IMR-90 (cell line): ENCODE measurements at regions of chr13 and their contacts with region 1.

Region 1: DNA sequence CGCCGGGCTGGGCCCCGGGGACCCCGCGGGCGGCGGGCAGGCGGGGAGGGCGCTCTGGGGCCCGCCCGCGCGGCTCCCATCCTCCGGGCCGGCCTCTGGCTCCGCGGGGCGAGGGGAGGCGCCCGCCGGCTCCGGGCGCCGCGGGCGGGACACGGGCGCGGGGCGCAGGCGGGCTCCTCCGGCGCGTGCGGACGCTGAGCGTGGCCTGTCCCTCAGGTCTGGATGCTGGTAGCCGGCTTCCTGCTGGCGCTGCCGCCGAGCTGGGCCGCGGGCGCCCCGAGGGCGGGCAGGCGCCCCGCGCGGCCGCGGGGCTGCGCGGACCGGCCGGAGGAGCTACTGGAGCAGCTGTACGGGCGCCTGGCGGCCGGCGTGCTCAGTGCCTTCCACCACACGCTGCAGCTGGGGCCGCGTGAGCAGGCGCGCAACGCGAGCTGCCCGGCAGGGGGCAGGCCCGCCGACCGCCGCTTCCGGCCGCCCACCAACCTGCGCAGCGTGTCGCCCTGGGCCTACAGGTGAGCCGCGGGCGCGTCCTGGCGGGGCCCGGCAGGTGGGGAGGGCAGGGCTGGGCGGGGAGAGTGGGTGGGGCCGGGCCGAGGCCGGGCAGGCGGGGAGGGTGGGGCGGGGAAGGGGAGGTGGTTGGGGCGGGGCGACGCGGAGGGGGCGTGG is 414 bp downstream of the IL17D start:
- DNase-seq: peak; percentile 82
- ATAC-seq: peak; percentile 91
- H3K4me3 ChIP-seq: peak overlapping the region; percentile 77
- H3K27ac ChIP-seq: no peak overlapping the region
- H3K4me1 ChIP-seq: peaks cover 4% of the 10 kb centered on the region; the same call in 1 of the 2 replicates
- H3K27me3 ChIP-seq: peaks cover 4% of the 10 kb centered on the region
- CTCF ChIP-seq: peak; percentile 84
- POLR2A ChIP-seq: peak; percentile 29; the same call in 1 of the 2 replicates
- RAD21 ChIP-seq: peak; percentile 52

Region 2: DNA sequence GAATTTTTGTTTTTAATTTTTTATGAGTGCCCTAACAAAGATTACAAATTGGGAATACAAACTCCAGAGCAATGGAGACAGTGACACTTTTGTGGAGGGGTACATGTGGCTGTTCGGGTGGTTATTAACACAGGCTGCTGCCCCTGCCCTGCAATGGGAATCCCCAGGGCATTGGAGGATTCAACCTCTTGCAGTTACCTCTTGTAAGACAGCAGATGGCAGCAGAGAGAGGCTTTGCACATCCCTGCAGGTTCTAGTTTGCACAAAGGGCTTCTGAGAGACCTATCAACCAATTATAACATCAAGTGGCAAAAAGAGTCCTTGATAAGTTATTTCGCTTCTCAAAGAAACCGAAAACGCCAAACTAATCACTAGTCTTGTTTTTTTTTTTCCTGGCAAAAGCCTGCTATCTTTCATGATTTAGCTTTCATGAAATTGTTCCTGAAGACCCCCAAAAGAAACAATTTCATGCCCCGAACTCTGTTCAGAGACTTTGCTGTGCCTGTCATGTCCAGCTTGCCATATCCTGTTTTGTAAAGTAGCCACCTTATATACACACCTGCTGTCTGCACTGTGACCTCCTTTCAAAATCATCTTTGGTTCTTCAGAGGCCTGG is 521.6 kb before region 1 on chr13:
- CTCF ChIA-PET with region 1: no interaction called
- POLR2A ChIA-PET with region 1: no interaction called
- dilution Hi-C with region 1: no loop called
- in situ Hi-C with region 1: loop called (anchors 25 kb)
- intact Hi-C with region 1: loop called (anchors 5 kb)
- DNase-seq: peak; percentile 80
- ATAC-seq: peak; percentile 99
- H3K4me3 ChIP-seq: no peak overlapping the region
- H3K27ac ChIP-seq: no peak overlapping the region
- H3K4me1 ChIP-seq: no peaks in the 10 kb centered on the region
- H3K27me3 ChIP-seq: peaks cover 19% of the 10 kb centered on the region
- CTCF ChIP-seq: peak; percentile 79
- POLR2A ChIP-seq: no peak
- RAD21 ChIP-seq: peak; percentile 87

Region 3: DNA sequence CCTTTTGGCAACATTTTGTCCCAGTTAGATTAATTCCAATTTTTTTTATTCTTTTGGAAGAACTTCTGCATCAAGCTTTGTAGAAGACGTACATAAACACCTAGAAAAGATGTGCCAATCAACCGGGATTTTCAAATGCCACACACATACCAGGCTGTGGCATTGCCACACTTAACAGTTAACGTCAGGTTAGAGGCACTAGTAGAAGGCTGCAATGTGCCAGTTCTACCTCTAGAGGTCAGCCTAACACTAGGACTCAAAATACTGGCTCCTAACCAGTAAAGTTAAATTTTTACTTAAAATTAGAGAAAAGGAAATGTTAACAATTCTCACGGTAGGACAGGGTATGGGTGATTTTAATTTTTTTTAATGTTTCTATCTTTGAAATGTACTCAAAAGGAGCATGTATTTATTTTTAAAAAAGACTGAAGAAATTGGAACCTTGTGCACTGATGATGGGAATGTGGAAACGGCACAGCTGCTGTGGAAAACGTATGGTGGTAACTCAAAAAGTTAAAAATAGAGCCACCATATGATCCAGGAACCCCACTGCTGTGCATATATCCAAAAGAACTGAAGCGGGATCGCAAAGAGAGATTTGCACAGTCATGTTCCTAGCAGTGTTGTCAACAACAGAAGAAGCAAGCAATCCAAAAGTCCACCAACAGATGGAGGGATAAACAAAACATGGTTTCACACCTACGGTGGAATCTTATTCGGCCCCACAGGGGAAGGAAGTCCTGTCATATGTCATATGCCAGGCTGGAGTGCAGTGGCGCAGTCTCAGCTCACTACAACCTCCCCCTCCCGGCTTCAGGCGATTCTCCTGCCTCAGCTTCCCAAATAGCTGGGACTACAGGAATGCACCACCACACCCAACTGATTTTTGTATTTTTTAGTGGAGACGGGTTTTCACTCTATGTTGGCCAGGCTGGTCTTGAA is 208.6 kb before region 1 on chr13:
- CTCF ChIA-PET with region 1: interaction called, 4 read pairs
- POLR2A ChIA-PET with region 1: no interaction called
- dilution Hi-C with region 1: no loop called
- in situ Hi-C with region 1: loop called (anchors 10 kb)
- intact Hi-C with region 1: loop called (anchors 1 kb)
- DNase-seq: peak; percentile 72
- ATAC-seq: peak; percentile 91
- H3K4me3 ChIP-seq: no peak overlapping the region
- H3K27ac ChIP-seq: no peak overlapping the region
- H3K4me1 ChIP-seq: peaks cover 5% of the 10 kb centered on the region
- H3K27me3 ChIP-seq: no peaks in the 10 kb centered on the region
- CTCF ChIP-seq: peak; percentile 94
- POLR2A ChIP-seq: no peak
- RAD21 ChIP-seq: peak; percentile 98

Region 4: DNA sequence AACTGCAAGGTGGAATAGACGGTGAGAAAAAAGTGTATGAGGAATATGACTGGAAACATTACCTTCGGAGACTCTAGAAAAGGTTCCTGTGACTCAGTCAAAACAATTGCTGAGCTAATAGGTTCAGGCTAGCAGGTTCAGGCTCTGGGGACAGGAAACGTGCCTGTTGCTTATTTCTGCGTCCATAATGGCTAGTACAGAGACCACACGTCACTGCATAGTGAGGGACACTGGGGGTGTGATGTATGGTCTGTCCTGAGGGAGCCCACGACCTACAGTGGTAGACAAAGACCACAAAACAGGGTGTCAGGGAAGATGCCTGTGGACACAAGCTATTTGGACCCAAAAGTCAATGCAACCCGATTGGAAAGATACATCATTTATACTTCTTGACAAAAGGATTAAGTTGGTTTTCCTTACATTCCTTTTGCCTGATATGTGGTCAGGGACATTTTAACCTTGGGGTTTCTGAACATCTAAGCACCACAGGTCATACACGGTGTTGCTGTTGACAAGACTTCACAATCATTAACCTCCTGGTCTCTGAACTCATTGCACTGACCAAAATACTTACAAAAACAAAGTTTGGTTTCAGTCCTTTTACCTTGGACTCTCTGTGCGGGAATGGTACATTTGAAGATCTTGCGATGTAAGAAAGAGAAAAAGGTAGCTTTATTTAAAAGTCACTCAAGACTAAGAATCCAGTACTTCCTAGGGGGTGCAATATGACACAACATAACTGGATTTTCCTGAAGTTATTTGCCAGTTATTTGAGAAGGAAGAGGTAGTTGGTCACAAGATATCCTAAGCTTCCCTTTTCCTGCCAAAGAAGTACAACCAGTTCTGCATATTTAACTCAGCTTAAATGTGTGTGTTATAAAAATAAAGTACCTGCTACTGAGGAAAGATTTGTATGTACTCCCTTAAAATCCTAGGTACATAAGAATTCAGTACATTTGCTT is 198.2 kb before region 1 on chr13:
- CTCF ChIA-PET with region 1: no interaction called
- POLR2A ChIA-PET with region 1: no interaction called
- dilution Hi-C with region 1: no loop called
- in situ Hi-C with region 1: loop called (anchors 10 kb)
- intact Hi-C with region 1: no loop called
- DNase-seq: no peak
- ATAC-seq: no peak
- H3K4me3 ChIP-seq: no peak overlapping the region
- H3K27ac ChIP-seq: no peak overlapping the region
- H3K4me1 ChIP-seq: no peaks in the 10 kb centered on the region
- H3K27me3 ChIP-seq: no peaks in the 10 kb centered on the region
- CTCF ChIP-seq: no peak
- POLR2A ChIP-seq: no peak
- RAD21 ChIP-seq: no peak

Region 5: GRCh38 chr13:20525690-20526544 is 178.0 kb before region 1 on chr13 and contains the start of gene CRYL1:
- CTCF ChIA-PET with region 1: no interaction called
- POLR2A ChIA-PET with region 1: no interaction called
- dilution Hi-C with region 1: no loop called
- in situ Hi-C with region 1: no loop called
- intact Hi-C with region 1: loop called (anchors 1 kb)
- DNase-seq: peak; percentile 73
- ATAC-seq: peak; percentile 99
- H3K4me3 ChIP-seq: peak within 1 kb of the TSS; percentile 87
- H3K27ac ChIP-seq: peak within 1 kb of the TSS; percentile 59; the same call in 1 of the 2 replicates
- H3K4me1 ChIP-seq: 0 out of 2 replicates have a peak, but pooled peaks cover 2% of the 10 kb centered on the region
- H3K27me3 ChIP-seq: no peaks in the 10 kb centered on the region
- CTCF ChIP-seq: no peak
- POLR2A ChIP-seq: peak; percentile 60; the same call in 1 of the 2 replicates
- RAD21 ChIP-seq: no peak
- total RNA-seq, gene CRYL1: 10.6 and 11.7 TPM in 2 replicates

Region 6: GRCh38 chr13:20609145-20609544 is 94.8 kb before region 1 on chr13:
- CTCF ChIA-PET with region 1: no interaction called
- POLR2A ChIA-PET with region 1: no interaction called
- dilution Hi-C with region 1: no loop called
- in situ Hi-C with region 1: no loop called
- intact Hi-C with region 1: loop called (anchors 5 kb)
- DNase-seq: peak; percentile 94
- ATAC-seq: peak; percentile 95
- H3K4me3 ChIP-seq: no peak overlapping the region
- H3K27ac ChIP-seq: no peak overlapping the region
- H3K4me1 ChIP-seq: peaks cover 8% of the 10 kb centered on the region
- H3K27me3 ChIP-seq: no peaks in the 10 kb centered on the region
- CTCF ChIP-seq: no peak
- POLR2A ChIP-seq: no peak
- RAD21 ChIP-seq: no peak